Sciatic nerve (tissue), 2 donors: ENCODE measurements at regions of chr5 and their contacts with region 1.

Region 1: DNA sequence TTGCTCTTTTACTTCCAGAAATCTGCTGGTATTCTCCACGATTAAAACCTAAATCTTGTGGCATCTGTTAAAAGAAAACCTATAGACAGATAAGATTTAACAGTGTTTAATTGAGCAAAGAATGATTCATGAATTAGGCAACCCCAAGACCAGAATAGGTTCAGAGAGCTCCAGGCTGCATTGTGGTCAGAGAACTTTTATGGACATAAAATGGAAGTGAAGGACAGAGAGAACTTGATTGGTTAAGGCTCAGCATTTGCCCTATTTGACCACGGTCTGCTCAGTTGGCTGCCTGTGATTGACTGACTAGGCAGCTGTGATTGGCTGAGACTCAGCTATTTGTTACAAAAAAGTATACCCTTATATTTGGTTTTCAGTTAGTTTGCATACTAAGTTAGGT is 10.4 kb upstream of the SLC36A2 start:
- DNase-seq: no peak
- ATAC-seq: no peak

Region 2: GRCh38 chr5:151315998-151316597 is 41.7 kb before region 1 on chr5:
- intact Hi-C with region 1: no loop called
- DNase-seq: peak; percentile 86
- ATAC-seq: peak; percentile 81

Region 3: GRCh38 chr5:151383011-151383410 is 25.2 kb after region 1 on chr5:
- intact Hi-C with region 1: loop called (anchors 1 kb)
- DNase-seq: no peak
- ATAC-seq: no peak